Endothelial cell of umbilical vein (primary cell): ENCODE measurements at regions of chr4 and their contacts with region 1.

Region 1: GRCh38 chr4:173013232-173013930 is 155.2 kb upstream of the GALNT7 start:
- DNase-seq: peak; percentile 68
- H3K4me3 ChIP-seq: no peak overlapping the region
- H3K27ac ChIP-seq: peak overlapping the region; percentile 52
- H3K4me1 ChIP-seq: peaks cover 12% of the 10 kb centered on the region
- H3K27me3 ChIP-seq: no peaks in the 10 kb centered on the region
- CTCF ChIP-seq: peak; percentile 25 to 45
- POLR2A ChIP-seq: no peak

Region 2: DNA sequence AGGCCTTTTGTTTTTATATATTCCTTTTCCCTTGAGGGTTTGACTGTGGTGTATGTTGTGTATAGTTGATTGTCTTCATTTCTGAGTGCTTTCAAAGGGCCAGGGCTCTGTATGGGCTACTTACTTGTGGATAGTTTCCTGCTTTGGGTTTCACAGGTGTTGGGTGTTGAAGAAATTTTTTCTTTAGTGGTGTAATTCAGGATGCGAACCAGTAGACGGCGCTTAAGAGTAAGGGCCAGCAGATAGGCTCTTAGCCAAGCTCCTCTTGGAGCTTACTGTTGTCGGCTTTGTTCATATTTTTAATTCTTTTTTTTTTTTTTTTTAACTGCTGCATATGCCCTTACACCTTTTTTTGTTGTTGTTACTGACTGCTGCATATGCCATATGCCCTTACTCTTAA is 121.1 kb before region 1 on chr4:
- CTCF ChIA-PET with region 1: interaction called, 10 read pairs
- POLR2A ChIA-PET with region 1: no interaction called
- dilution Hi-C with region 1: no loop called
- intact Hi-C with region 1: loop called (anchors 2 kb)
- DNase-seq: peak; percentile 40
- H3K4me3 ChIP-seq: no peak overlapping the region
- H3K27ac ChIP-seq: no peak overlapping the region
- H3K4me1 ChIP-seq: no peaks in the 10 kb centered on the region
- H3K27me3 ChIP-seq: no peaks in the 10 kb centered on the region
- CTCF ChIP-seq: peak; percentile 51 to 72
- POLR2A ChIP-seq: no peak

Region 3: GRCh38 chr4:173168396-173169177 is 155.2 kb after region 1 on chr4 and contains the start of gene GALNT7:
- CTCF ChIA-PET with region 1: interaction called, 49 read pairs
- POLR2A ChIA-PET with region 1: no interaction called
- dilution Hi-C with region 1: no loop called
- intact Hi-C with region 1: loop called (anchors 1 kb)
- DNase-seq: peak; percentile 61
- H3K4me3 ChIP-seq: peak within 1 kb of the TSS; percentile 81 to 94 (median 83)
- H3K27ac ChIP-seq: peak within 1 kb of the TSS; percentile 62
- H3K4me1 ChIP-seq: peaks cover 23% of the 10 kb centered on the region
- H3K27me3 ChIP-seq: no peaks in the 10 kb centered on the region
- CTCF ChIP-seq: no peak
- POLR2A ChIP-seq: no peak
- total RNA-seq, gene GALNT7: 54.6 and 63.3 TPM in 2 replicates

Region 4: DNA sequence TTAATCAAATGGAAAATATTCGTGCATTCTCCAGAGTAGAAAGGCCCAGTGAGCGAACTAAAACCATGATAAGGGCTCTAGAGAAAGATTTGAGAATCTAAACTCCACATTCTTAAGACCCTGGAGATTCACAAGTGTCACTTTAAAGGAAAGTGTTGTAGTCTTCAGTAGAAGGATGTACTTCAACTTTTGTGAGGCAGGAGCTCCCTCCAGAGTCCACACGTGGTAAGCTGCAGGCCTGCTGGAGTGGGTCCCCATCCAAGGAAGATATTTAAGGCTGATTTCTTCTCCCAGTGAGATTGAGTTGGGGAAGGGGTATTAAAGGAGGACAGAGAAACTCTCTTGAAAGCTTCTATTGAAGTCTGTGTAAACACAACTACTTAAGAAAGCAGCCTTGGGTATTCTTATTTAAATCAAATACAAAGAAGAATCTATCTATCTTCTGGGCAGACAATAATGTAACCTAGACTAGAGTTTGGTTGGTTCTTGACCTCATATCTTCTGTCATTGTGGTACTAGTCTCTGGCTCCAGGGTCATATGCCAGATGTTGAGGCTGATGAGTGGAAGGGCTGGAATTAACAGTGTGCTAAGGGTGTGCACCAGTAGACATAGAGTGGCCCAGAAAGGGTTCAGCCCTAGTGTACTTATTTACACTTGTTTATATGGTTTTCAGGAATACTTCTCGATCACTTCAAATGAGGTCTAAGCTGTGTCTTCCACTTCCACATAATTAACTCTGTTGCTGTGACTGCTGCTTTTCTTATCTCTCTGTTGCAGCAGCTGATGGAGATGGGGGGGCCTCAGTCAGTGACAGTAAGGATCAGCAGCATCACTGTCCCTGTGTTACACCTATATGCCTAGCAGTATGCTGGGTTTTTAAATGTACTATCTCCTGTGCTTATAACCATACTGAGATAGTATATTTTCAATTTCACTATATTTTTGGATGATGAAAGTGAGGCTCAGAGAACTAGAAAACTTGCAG is 244.6 kb after region 1 on chr4:
- CTCF ChIA-PET with region 1: interaction called, 403 read pairs
- POLR2A ChIA-PET with region 1: interaction called, 5 read pairs
- dilution Hi-C with region 1: no loop called
- intact Hi-C with region 1: loop called (anchors 1 kb)
- DNase-seq: peak; percentile 74
- H3K4me3 ChIP-seq: no peak overlapping the region
- H3K27ac ChIP-seq: no peak overlapping the region
- H3K4me1 ChIP-seq: peaks cover 2% of the 10 kb centered on the region
- H3K27me3 ChIP-seq: no peaks in the 10 kb centered on the region
- CTCF ChIP-seq: peak; percentile 76 to 93
- POLR2A ChIP-seq: no peak

Region 5: GRCh38 chr4:173301518-173302201 is 288.3 kb after region 1 on chr4:
- CTCF ChIA-PET with region 1: interaction called, 124 read pairs
- POLR2A ChIA-PET with region 1: no interaction called
- dilution Hi-C with region 1: no loop called
- intact Hi-C with region 1: loop called (anchors 1 kb)
- DNase-seq: peak; percentile 38
- H3K4me3 ChIP-seq: no peak overlapping the region
- H3K27ac ChIP-seq: no peak overlapping the region
- H3K4me1 ChIP-seq: no peaks in the 10 kb centered on the region
- H3K27me3 ChIP-seq: no peaks in the 10 kb centered on the region
- CTCF ChIP-seq: peak; percentile 52 to 53
- POLR2A ChIP-seq: no peak

Region 6: GRCh38 chr4:173413036-173413435 is 399.7 kb after region 1 on chr4:
- CTCF ChIA-PET with region 1: interaction called, 15 read pairs
- POLR2A ChIA-PET with region 1: no interaction called
- dilution Hi-C with region 1: no loop called
- intact Hi-C with region 1: loop called (anchors 1 kb)
- DNase-seq: peak; percentile 68
- H3K4me3 ChIP-seq: no peak overlapping the region
- H3K27ac ChIP-seq: no peak overlapping the region
- H3K4me1 ChIP-seq: peaks cover 24% of the 10 kb centered on the region
- H3K27me3 ChIP-seq: no peaks in the 10 kb centered on the region
- CTCF ChIP-seq: no peak
- POLR2A ChIP-seq: no peak